Activated T-helper 1 cell treated with anti-CD3 and anti-CD28 coated beads, Interleukin-12 subunit alpha, Interleukin-12 subunit beta, Interleukin-2, Interleukin-4 antibody, amounts not matched to agents 30 ng/mL and 10 ng/mL and 1 ng/mL, durations not matched to agents 14 hours and 24 hours and 36 hours (primary cell): ENCODE measurements at regions of chr13 and their contacts with region 1.

Region 1: DNA sequence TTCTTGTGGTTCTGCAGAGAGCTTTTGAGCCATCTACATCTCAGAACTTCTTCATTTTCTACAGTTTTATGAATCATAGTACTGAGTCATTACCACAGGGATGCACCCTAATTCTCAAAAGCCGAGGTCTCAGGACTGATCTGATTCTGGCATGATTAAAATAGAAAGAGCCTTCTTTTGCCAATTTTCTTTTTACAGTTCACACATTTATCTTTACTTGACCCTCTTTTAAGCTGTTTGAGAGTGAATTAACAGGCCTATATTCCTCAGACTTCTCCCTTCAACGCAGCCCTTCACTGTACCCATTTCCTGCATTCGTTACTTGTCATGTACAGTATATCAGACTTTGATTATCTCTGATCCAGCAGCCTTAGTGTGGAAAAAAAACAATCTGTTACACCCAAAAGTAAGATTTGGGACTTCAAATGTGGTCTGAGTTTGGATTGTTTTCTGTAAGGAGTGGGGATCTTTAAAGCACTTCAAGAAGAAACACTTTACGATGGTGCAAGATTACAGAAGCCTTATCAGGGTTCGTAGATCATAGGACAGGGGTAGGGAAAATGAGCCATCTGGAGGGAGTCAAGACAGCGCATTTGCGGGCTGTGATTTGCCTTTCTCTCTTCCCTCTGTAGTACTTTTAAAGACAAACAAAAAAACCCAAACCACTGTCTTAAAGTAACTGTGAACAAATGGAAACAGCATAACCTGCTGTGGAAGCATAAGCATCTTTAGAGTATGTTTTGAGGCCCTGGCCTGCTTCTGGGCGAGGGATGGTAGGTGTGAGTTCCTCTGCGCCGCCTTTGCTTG is 15.3 kb upstream of the GPR183 start:
- DNase-seq: no peak
- H3K4me3 Mint-ChIP-seq: peak overlapping the region; percentile 38
- H3K27ac Mint-ChIP-seq: peak overlapping the region; percentile 96
- H3K4me1 Mint-ChIP-seq: peaks cover 68% of the 10 kb centered on the region
- H3K27me3 Mint-ChIP-seq: no peaks in the 10 kb centered on the region

Region 2: GRCh38 chr13:98570929-98571372 is 751.5 kb before region 1 on chr13:
- intact Hi-C with region 1: loop called (anchors 5 kb)
- DNase-seq: peak; percentile 51
- H3K4me3 Mint-ChIP-seq: peak overlapping the region; percentile 81
- H3K27ac Mint-ChIP-seq: peak overlapping the region; percentile 91
- H3K4me1 Mint-ChIP-seq: peaks cover 98% of the 10 kb centered on the region
- H3K27me3 Mint-ChIP-seq: no peaks in the 10 kb centered on the region

Region 3: GRCh38 chr13:99165753-99166587 is 156.5 kb before region 1 on chr13:
- intact Hi-C with region 1: no loop called
- DNase-seq: no peak
- H3K4me3 Mint-ChIP-seq: no peak overlapping the region
- H3K27ac Mint-ChIP-seq: no peak overlapping the region
- H3K4me1 Mint-ChIP-seq: no peaks in the 10 kb centered on the region
- H3K27me3 Mint-ChIP-seq: peaks cover 16% of the 10 kb centered on the region

Region 4: DNA sequence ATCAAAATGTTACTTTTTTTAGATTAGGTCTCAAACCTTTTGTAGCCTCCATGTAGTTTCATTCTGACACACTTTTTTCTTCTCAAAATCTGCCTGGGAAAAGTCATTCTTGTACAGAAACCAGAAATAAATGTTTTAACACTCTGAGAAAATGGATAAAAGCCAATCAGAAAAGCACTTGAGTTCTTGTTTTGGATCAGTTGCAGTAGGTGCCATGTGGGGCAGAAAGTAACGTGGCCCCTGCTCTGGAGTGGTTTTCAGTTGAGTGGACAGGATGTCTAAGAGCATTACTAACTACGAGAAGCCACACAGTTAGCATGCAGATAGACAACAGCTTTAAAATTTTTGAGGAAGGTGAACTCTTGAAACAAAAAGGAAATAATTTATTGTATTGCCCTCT is 34.4 kb before region 1 on chr13:
- intact Hi-C with region 1: loop called (anchors 1 kb)
- DNase-seq: no peak
- H3K4me3 Mint-ChIP-seq: peak overlapping the region; percentile 6
- H3K27ac Mint-ChIP-seq: peak overlapping the region; percentile 50
- H3K4me1 Mint-ChIP-seq: peaks cover 61% of the 10 kb centered on the region
- H3K27me3 Mint-ChIP-seq: no peaks in the 10 kb centered on the region

Region 5: GRCh38 chr13:99307648-99308339 is 14.7 kb before region 1 on chr13:
- intact Hi-C with region 1: loop called (anchors 1 kb)
- DNase-seq: peak; percentile 42
- H3K4me3 Mint-ChIP-seq: peak overlapping the region; percentile 83
- H3K27ac Mint-ChIP-seq: peak overlapping the region; percentile 87
- H3K4me1 Mint-ChIP-seq: peaks cover 88% of the 10 kb centered on the region
- H3K27me3 Mint-ChIP-seq: no peaks in the 10 kb centered on the region

Region 6: DNA sequence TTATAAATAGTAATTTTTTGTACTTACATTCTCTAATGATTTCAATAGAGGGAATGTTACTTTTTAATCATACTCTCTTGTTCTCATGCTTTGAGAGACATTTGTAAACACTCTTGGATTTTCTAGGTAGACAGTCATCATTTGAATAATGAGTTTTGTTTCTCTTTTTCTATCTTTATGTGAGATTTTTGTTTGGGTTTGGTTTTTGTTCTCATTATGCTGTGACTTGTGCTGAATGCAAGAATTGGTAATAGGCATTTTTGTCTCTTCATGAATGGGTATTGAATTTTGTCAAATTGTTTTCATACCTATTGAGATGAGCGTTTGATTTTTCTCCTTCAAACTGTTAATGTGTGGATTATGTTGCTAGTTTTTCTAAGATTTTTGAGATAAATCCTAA is 41.4 kb after region 1 on chr13:
- intact Hi-C with region 1: loop called (anchors 2 kb)
- DNase-seq: no peak
- H3K4me3 Mint-ChIP-seq: no peak overlapping the region
- H3K27ac Mint-ChIP-seq: peak overlapping the region; percentile 11
- H3K4me1 Mint-ChIP-seq: peaks cover 84% of the 10 kb centered on the region
- H3K27me3 Mint-ChIP-seq: peaks cover 3% of the 10 kb centered on the region

Region 7: GRCh38 chr13:99606324-99607066 is 284.0 kb after region 1 on chr13:
- intact Hi-C with region 1: loop called (anchors 2 kb)
- DNase-seq: peak; percentile 82
- H3K4me3 Mint-ChIP-seq: peak within 1 kb of the TSS; percentile 89
- H3K27ac Mint-ChIP-seq: peak within 1 kb of the TSS; percentile 81
- H3K4me1 Mint-ChIP-seq: peaks cover 29% of the 10 kb centered on the region
- H3K27me3 Mint-ChIP-seq: peaks cover 4% of the 10 kb centered on the region